ENCODE measurements at regions of chr16 and their contacts with region 1.

Region 1: DNA sequence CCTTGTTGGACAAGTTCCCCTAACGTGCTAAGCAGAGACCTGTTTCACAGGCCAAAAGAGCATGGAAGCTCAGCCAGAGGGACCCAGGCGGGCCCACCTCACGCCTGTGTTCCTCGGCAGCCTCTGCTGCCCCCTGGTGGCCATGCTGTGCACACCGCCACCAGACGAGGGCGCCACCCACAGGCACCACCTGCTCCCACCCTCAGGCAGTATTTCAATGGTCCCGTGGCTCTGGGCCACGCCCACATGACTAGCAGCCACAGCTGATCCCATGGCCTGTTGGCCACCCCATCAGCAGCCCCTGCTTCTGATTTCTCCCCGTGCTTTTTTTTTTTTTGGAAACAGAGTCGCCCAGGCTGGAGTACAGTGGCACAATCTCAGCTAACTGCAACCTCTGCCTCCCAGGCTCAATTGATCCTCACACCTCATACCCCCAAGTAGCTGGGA is 18.9 kb downstream of the MPG start:
- DNase-seq: peak; percentile 91 to 95
- ATAC-seq: peak; percentile 100
- H3K4me3 ChIP-seq: no peak overlapping the region
- H3K4me3 Mint-ChIP-seq: no peak overlapping the region
- H3K27ac ChIP-seq: no peak overlapping the region
- H3K27ac Mint-ChIP-seq: peak overlapping the region in 1 of 2 donors; percentile 20
- H3K4me1 ChIP-seq: peaks cover 8% of the 10 kb centered on the region
- H3K4me1 Mint-ChIP-seq: peaks cover 0 to 18% of the 10 kb centered on the region in 2 donors
- H3K27me3 ChIP-seq: no peaks in the 10 kb centered on the region
- H3K27me3 Mint-ChIP-seq: no peaks in the 10 kb centered on the region
- CTCF ChIP-seq: peak; percentile 99

Region 2: GRCh38 chr16:38939-39892 is 57.7 kb before region 1 on chr16:
- intact Hi-C with region 1: no loop called
- DNase-seq: peak in 1 of 2 donors; percentile 69
- ATAC-seq: peak; percentile 79 to 89 (median 88)
- H3K4me3 ChIP-seq: no peak overlapping the region
- H3K4me3 Mint-ChIP-seq: no peak overlapping the region
- H3K27ac ChIP-seq: peak overlapping the region; percentile 80
- H3K27ac Mint-ChIP-seq: no peak overlapping the region
- H3K4me1 ChIP-seq: peaks cover 56% of the 10 kb centered on the region
- H3K4me1 Mint-ChIP-seq: peaks cover 21 to 61% of the 10 kb centered on the region in 2 donors
- H3K27me3 ChIP-seq: no peaks in the 10 kb centered on the region
- H3K27me3 Mint-ChIP-seq: no peaks in the 10 kb centered on the region
- CTCF ChIP-seq: no peak

Region 3: DNA sequence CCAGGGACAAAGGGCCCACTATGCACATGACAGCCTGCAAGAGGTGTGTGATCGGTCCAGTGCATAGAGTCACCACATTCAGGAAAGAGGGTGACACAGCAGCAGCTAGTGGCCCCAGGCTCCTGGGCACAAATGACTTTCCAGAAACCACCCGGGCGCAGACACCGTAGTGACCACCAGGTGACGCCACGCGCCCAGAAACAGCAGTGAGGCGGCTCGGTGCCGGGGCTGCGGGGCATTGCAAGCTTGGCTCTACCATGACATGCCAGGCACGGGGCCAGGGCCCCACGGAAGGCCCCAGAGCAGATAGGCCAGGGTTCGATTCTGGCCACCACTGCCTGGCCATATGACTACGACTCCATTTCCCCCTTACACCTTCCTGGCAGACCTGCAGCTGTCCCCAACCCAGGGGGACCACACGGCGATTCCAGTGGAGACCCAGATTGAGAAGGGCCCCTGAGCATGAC is 31.3 kb before region 1 on chr16:
- intact Hi-C with region 1: loop called (anchors 1 kb)
- DNase-seq: peak; percentile 85 to 88
- ATAC-seq: peak; percentile 84 to 100 (median 97)
- H3K4me3 ChIP-seq: no peak overlapping the region
- H3K4me3 Mint-ChIP-seq: no peak overlapping the region
- H3K27ac ChIP-seq: no peak overlapping the region
- H3K27ac Mint-ChIP-seq: no peak overlapping the region
- H3K4me1 ChIP-seq: peaks cover 4% of the 10 kb centered on the region
- H3K4me1 Mint-ChIP-seq: peaks cover 0 to 6% of the 10 kb centered on the region in 2 donors
- H3K27me3 ChIP-seq: no peaks in the 10 kb centered on the region
- H3K27me3 Mint-ChIP-seq: peaks cover 0 to 2% of the 10 kb centered on the region in 2 donors
- CTCF ChIP-seq: peak; percentile 94

Measured in natural killer cell (primary cell).